ENCODE measurements at regions of chr2 and their contacts with region 1.

Region 1: GRCh38 chr2:11129598-11130449 is 25.4 kb upstream of the SLC66A3 start:
- DNase-seq: peak in 7 of 10 donors; percentile 24 to 94 (median 60)

Region 2: DNA sequence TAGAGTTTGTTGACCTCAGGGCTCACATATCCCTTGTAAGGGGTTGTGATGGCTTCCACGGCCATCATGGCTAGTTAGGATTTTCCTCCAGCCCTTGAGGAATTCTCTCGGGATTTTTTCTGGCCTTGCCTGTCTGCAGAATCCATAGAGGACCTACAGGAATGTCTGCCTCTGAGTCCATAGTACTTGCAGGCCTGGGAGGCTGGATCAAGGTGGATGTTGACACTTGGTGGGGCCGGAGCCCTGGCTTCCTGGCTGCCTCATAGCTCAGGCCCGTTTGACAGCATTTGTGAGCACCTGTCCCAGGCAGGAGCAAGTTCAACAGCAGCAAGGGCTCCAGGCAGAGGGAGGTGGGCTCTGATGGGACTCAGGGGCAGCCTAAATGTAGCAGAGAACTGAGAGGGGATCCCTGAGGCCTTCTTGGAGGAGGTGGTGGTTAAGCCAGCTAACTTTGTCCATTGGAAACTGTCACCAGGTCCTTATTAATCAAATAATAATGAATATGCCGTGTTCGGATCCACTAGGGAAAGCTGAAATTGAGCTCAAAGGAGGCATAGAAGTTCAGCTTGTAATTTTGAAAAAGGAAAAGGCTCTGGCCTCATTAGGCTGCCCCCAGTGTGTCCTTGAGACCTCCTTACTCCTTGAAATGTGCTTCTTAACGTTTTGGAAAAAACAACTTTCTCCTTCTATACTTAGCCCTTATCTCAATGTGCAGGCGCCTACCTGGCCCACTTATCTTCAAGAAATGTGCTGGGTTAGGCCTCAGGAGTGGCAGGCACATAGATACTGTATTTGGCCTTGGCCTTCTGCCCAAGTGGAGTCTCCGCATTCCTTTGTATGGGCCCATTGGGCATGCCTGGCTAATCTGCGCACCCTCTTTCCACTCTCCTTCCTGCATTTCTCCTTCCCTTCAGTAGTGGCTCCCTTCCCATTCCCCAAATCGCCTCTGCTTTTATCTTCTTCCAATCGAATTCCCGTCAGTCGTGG is 760.3 kb before region 1 on chr2:
- intact Hi-C with region 1: no loop called
- DNase-seq: peak in 1 of 10 donors; percentile 63

Region 3: GRCh38 chr2:11411768-11412448 is 282.1 kb after region 1 on chr2:
- intact Hi-C with region 1: loop called (anchors 1 kb)
- DNase-seq: peak in 5 of 10 donors; percentile 37 to 84 (median 57)

Region 4: GRCh38 chr2:11446733-11447248 is 317.0 kb after region 1 on chr2:
- intact Hi-C with region 1: loop called (anchors 10 kb)
- DNase-seq: peak in 7 of 10 donors; percentile 29 to 89 (median 65)

Region 5: DNA sequence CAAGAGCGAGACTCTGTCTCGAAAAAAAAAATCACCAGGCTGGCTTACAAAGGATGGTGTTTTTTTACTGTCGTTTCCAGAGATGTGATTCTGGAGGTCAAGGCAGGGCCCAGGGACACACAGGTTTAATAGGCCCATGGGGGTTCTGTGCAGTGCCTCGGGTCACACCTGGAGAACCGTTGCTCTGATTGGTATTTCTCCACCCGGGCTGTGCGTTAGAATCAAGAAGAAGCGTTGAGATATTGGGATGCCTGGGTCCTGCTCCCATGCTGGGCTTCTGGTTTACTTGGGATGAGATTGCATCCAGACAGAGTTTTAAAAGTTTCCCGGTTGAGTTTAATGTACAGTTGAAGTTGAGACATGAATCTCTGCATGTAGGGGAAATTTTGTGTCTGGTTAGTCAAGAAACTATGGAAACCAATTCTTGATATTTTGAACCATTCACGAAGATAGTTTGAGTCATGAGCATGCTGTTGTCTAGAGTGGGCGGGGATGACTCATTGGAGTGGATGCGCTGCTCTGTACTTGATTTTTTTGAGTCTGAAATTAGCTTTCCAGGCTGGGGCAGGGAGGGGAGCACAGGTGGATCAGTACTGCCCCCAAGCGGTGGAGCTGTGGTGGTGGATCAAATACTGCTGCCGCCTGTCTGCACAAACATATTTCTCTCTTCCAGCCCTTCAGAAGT is 454.2 kb after region 1 on chr2:
- intact Hi-C with region 1: loop called (anchors 5 kb)
- DNase-seq: peak; percentile 75 to 98 (median 84)